ENCODE measurements at regions of chr1 and their contacts with region 1.

Region 1: GRCh38 chr1:19582302-19582701 is 61.8 kb upstream of the NBL1 start:
- DNase-seq: peak; percentile 60
- ATAC-seq: peak; percentile 98
- H3K4me3 ChIP-seq: no peak overlapping the region
- H3K27ac ChIP-seq: no peak overlapping the region
- H3K4me1 ChIP-seq: peaks cover 0 to 6% of the 10 kb centered on the region in 2 experiments; a peak in 1 of 4 replicates
- H3K27me3 ChIP-seq: no peaks in the 10 kb centered on the region
- CTCF ChIP-seq: peak; percentile 72 to 91 (median 86)
- POLR2A ChIP-seq: no peak
- RAD21 ChIP-seq: peak; percentile 84

Region 2: DNA sequence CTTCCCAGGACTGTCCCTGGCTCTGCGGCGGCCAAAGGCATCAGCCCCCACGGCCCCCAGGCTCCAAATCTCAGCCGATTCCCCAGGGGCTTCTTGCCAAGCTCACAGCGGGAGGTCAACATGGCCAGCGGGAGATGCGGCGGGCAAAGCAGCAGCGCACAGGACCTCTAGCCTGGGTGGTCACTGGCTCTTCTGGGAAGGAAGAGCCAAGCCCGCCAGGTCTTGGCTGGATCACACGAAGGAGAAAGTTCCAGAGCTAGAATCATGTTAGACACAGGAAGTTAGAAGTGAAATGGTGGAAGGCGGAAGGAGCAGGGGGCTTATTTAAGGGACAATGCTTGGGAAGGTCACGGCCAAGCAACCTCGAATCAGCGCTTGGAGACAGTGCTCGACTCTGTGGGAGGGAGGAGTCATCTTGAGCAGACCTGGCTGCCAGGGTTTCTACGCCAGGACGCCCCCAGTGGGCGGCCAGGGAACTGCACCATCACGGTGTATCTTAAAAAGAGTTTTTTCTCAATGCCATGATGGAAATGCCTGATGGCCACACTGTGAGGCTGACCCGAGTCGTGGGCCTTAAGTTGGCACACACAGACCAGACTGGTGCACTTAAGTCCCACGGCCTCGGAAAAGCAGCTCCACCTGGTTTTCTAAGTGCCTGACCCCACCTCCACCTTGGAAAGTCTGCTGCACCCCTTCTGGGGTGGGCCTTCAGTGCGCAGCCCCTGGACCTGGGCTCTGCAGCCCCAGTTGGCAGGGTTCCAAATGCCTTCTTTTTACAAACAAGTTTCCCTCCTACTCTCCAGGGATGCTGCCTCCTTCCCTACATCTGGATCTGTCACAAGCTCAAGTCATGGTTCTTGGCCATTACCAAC is 240.9 kb before region 1 on chr1:
- CTCF ChIA-PET with region 1: interaction called, 5 read pairs
- POLR2A ChIA-PET with region 1: no interaction called
- RAD21 ChIA-PET with region 1: no interaction called
- intact Hi-C with region 1: loop called (anchors 1 kb)
- DNase-seq: peak; percentile 62
- ATAC-seq: peak; percentile 81
- H3K4me3 ChIP-seq: no peak overlapping the region
- H3K27ac ChIP-seq: no peak overlapping the region
- H3K4me1 ChIP-seq: peaks cover 25 to 30% of the 10 kb centered on the region in 2 experiments
- H3K27me3 ChIP-seq: no peaks in the 10 kb centered on the region
- CTCF ChIP-seq: peak; percentile 32 to 94 (median 87); a peak in 5 of 6 replicates
- POLR2A ChIP-seq: no peak
- RAD21 ChIP-seq: peak; percentile 53

Region 3: GRCh38 chr1:19390901-19391595 is 191.3 kb before region 1 on chr1:
- CTCF ChIA-PET with region 1: interaction called, 14 read pairs
- POLR2A ChIA-PET with region 1: no interaction called
- RAD21 ChIA-PET with region 1: interaction called in 1 of 2 experiments, 3 read pairs
- intact Hi-C with region 1: loop called (anchors 1 kb)
- DNase-seq: peak; percentile 7
- ATAC-seq: peak; percentile 68
- H3K4me3 ChIP-seq: no peak overlapping the region
- H3K27ac ChIP-seq: no peak overlapping the region
- H3K4me1 ChIP-seq: no peaks in the 10 kb centered on the region; a peak in 1 of 4 replicates
- H3K27me3 ChIP-seq: no peaks in the 10 kb centered on the region
- CTCF ChIP-seq: peak; percentile 62 to 84 (median 81)
- POLR2A ChIP-seq: no peak
- RAD21 ChIP-seq: peak; percentile 67

Region 4: DNA sequence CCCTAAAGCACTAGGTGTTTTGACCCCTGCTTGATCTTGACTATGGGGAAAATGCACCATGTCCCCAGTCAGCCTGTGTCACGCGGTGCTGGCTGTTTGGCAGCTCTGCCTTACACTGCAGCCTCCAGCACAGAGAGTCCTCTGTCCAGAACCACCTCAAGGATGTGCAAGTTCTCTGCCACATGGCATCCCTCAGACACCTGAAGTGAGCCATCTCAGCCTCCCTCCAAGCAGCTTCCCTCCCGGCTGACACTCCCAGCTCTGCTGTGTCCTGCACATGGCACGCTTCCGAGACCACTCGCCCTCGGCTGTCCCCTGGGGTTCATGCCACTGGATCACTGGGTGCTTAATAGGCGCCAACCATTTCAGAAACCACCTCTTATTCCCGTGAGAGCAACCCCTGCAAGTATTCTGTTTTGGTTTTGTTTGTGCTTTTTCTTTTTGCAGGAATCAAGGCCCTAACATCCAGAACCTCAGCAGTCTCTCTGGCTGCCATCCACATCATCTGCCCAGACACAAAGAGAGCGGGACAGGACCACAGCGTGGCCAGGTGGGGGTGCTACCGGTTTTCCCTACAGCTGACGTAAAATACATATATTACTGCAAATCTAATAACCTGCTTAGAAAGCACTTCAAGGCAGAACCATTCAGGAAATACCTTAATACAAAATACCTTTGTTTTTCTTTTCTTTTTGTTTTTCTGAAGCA is 142.7 kb before region 1 on chr1:
- CTCF ChIA-PET with region 1: interaction called, 14 read pairs
- POLR2A ChIA-PET with region 1: no interaction called
- RAD21 ChIA-PET with region 1: interaction called in 1 of 2 experiments, 4 read pairs
- intact Hi-C with region 1: loop called (anchors 1 kb)
- DNase-seq: no peak
- ATAC-seq: 0 out of 2 replicates have a peak, but pooled peaks have one; percentile 35
- H3K4me3 ChIP-seq: no peak overlapping the region
- H3K27ac ChIP-seq: no peak overlapping the region
- H3K4me1 ChIP-seq: peaks cover 15 to 31% of the 10 kb centered on the region in 2 experiments
- H3K27me3 ChIP-seq: no peaks in the 10 kb centered on the region
- CTCF ChIP-seq: peak; percentile 39 to 52 (median 43); a peak in 5 of 6 replicates
- POLR2A ChIP-seq: no peak
- RAD21 ChIP-seq: peak; percentile 64

Region 5: DNA sequence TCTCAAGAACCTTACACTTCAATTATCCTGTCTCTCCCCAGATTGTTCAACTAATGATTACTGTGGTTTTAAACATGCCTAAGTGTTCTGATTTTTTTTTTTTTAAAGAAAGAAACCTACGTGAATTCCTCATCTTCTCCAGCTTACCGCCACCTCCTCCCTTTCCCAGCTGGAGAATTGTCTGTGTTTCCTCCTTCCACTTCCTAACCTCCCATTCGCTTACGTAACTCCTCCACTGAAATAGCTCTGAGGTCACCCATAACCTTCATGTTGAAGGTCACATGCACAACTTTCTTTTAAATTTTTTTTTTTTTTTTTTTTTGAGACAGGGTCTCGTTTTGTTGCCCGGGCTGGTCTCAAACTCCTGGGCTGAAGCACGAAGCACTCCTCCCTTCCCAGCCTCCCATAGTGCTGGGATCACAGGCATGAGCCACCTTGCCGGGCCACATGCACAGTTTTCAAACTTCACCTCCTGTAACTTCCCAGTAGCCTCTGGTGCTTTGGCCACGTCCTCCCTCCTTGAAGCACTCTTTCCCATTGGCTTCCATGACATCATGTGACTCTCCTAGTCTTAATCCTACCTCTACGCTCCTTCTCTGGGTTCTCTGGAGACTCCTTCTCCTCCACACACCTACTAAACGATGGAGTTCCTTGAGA is 87.2 kb before region 1 on chr1:
- CTCF ChIA-PET with region 1: interaction called, 3 read pairs
- POLR2A ChIA-PET with region 1: no interaction called
- RAD21 ChIA-PET with region 1: no interaction called
- intact Hi-C with region 1: loop called (anchors 5 kb)
- DNase-seq: no peak
- ATAC-seq: no peak
- H3K4me3 ChIP-seq: no peak overlapping the region
- H3K27ac ChIP-seq: no peak overlapping the region
- H3K4me1 ChIP-seq: no peaks in the 10 kb centered on the region
- H3K27me3 ChIP-seq: no peaks in the 10 kb centered on the region
- CTCF ChIP-seq: no peak
- POLR2A ChIP-seq: no peak
- RAD21 ChIP-seq: no peak

Region 6: DNA sequence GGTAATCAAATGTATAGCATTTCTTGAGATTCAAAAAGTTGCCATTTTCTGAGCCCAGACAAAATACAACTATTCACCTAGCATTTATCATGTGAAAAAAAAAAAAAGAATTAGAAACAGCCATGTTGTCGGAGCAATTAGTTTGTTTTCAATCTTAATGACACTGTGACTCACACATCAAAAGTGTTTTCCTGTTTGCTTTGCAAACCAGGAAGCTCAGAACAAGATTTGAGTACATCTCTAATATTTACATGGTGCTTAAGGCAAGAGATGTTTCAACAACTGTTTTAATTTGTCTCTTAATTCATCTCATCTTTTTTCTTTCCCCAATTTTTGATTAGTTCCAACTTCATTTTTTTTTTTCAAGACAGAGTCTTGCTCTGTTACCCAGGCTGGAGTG is 34.5 kb before region 1 on chr1:
- CTCF ChIA-PET with region 1: no interaction called
- POLR2A ChIA-PET with region 1: no interaction called
- RAD21 ChIA-PET with region 1: no interaction called
- intact Hi-C with region 1: no loop called
- DNase-seq: no peak
- ATAC-seq: no peak
- H3K4me3 ChIP-seq: no peak overlapping the region
- H3K27ac ChIP-seq: no peak overlapping the region
- H3K4me1 ChIP-seq: no peaks in the 10 kb centered on the region
- H3K27me3 ChIP-seq: no peaks in the 10 kb centered on the region
- CTCF ChIP-seq: no peak
- POLR2A ChIP-seq: no peak
- RAD21 ChIP-seq: no peak

Region 7: DNA sequence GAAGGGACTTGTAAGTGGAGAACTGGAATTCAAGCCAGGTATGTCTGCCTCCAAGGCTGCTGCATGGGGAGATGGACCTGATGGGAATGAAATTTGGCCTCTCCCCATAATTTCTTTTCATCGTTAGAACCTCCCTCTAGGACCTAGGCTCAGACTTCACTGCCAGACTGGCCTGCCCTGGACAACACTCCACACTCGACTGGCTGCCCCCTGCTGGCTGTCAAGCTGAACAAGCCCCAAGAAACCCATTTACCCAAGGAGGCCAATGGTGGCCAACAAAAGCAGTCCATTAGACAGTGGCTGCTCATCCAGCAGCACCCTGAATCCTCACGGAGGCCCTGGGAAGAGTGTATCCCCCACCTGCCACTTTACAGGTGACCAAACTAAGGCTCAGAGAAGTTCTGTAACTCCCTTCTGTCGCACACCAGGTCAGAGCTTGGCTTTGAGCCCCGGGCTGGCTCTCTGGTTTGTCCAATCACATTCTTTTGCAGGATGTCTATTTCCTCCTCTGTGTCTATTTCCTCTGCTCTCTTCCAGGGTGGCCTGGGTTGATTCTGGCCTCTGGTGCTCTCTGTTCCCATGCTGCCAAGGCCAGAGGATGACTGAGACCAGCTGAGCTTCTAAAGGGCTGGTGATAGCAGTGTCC is 229.0 kb after region 1 on chr1:
- CTCF ChIA-PET with region 1: no interaction called
- POLR2A ChIA-PET with region 1: no interaction called
- RAD21 ChIA-PET with region 1: no interaction called
- intact Hi-C with region 1: no loop called
- DNase-seq: peak; percentile 34
- ATAC-seq: peak; percentile 94
- H3K4me3 ChIP-seq: no peak overlapping the region
- H3K27ac ChIP-seq: no peak overlapping the region
- H3K4me1 ChIP-seq: no peaks in the 10 kb centered on the region; a peak in 1 of 4 replicates
- H3K27me3 ChIP-seq: no peaks in the 10 kb centered on the region
- CTCF ChIP-seq: peak; percentile 64 to 75 (median 69); a peak in 5 of 6 replicates
- POLR2A ChIP-seq: no peak
- RAD21 ChIP-seq: peak; percentile 63

Region 8: DNA sequence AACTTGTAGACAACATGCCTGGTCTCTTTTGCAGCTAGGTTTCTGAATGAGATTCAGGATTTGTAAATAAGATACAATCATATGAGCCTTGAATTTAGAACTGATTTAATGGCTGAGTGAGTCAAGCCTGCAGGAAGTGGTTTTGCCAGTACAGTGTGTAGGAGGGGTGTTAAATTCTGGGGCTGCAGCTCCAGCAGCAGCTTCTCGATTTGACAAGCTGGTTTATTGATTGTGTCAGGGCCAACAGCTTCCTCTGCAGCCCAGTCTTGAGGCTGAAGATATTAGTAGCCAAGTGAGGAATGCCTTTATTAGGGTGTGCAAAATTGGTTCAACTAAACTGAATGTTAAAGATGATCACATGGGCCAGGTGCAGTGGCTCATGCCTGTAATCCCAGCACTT is 476.2 kb after region 1 on chr1:
- CTCF ChIA-PET with region 1: no interaction called
- POLR2A ChIA-PET with region 1: no interaction called
- RAD21 ChIA-PET with region 1: no interaction called
- intact Hi-C with region 1: no loop called
- DNase-seq: no peak
- ATAC-seq: no peak
- H3K4me3 ChIP-seq: no peak overlapping the region
- H3K27ac ChIP-seq: no peak overlapping the region
- H3K4me1 ChIP-seq: peaks cover 0 to 8% of the 10 kb centered on the region in 2 experiments; a peak in 2 of 4 replicates
- H3K27me3 ChIP-seq: no peaks in the 10 kb centered on the region
- CTCF ChIP-seq: no peak
- POLR2A ChIP-seq: no peak
- RAD21 ChIP-seq: no peak

Region 9: DNA sequence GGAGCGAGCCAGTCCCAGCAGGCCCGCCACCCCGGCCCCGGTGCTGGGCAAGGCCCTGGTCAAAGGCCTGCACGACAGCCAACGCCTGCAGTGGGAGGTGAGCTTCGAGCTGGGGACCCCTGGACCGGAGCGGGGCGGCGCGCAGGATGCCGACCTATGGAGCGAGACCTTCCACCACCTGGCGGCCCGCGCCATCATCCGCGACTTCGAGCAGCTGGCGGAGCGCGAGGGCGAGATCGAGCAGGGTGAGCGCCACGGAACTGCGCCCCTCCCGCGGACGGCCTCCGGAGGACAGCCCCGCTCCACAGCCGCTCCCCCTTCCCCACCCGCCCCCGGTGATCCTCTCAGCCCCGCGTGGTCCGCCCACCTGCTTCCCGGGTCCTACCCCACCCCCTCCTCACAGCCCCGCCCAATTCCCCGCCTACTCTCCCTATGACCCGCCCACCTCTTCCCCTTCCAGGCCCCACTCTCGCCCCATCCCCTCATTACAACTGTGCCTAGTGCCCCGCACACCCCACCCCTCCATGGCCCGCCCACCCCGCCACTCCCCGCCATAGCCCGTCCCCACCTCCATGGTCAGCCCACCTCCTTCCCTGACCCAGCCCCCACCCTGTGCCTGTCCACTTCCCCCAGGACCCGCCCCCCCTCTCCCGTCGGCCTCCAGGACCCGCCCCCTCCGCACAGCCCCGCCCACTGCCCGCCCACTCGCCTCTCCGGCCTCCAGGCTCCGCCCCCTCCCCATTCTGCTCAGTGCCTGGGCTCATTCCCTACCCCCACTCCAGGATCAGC is 761.0 kb after region 1 on chr1:
- CTCF ChIA-PET with region 1: no interaction called
- POLR2A ChIA-PET with region 1: no interaction called
- RAD21 ChIA-PET with region 1: no interaction called
- intact Hi-C with region 1: no loop called
- DNase-seq: no peak
- ATAC-seq: peak; percentile 69
- H3K4me3 ChIP-seq: no peak overlapping the region
- H3K27ac ChIP-seq: no peak overlapping the region
- H3K4me1 ChIP-seq: 0 out of 4 replicates have a peak, but pooled peaks cover 0 to 4% of the 10 kb centered on the region in 2 experiments
- H3K27me3 ChIP-seq: no peaks in the 10 kb centered on the region
- CTCF ChIP-seq: no peak
- POLR2A ChIP-seq: no peak
- RAD21 ChIP-seq: no peak

Measured in HCT116 (cell line).